BJ (cell line): ENCODE measurements at regions of chr12 and their contacts with region 1.

Region 1: DNA sequence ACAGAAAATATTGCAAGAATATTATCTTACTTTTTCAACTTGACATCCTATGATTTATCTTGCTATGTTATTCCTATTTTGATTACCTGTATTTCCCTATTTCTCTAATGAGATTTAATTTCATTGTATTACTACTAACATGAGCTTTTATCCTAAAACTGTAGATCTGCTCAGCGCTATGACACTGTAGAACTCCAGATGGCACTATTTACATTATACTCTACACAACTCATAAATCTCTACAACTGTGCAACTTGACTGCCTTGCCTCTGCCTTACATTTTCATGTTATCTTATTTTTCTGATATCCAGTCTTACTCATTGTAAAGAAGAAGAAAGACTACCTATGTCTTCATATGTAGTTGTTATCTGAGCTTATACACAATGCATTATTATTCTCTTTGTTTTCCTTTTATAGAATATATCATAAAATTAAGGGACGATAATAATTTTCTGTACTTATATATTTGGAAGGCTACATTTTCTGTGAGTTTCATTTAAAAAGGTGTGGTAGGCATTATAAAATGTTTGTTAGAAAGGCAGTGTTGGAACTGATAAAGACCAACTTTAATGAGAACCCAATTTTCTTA is 24.1 kb downstream of the NUP37 start:
- DNase-seq: no peak
- H3K4me3 ChIP-seq: no peak overlapping the region
- H3K27me3 ChIP-seq: no peaks in the 10 kb centered on the region
- CTCF ChIP-seq: peak; percentile 46

Region 2: DNA sequence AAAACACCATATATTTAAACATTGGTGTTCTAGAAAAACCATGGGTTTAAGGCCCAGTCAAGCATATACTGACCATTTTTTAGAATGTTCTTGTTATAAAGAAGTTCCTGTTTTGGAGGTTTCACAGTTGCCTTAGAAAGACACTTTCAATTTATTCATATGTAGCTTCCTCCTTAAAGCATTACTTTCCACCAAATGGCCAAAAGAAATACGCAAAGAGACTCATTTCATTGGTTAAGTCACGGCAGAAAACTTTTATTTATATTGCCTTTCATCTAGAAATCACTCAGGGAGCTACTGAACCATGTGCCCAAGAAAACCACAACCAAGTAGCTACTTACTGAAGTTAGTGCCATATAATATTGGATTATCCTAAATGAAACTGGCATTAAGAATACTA is 461.0 kb before region 1 on chr12:
- CTCF ChIA-PET with region 1: no interaction called
- POLR2A ChIA-PET with region 1: no interaction called
- DNase-seq: no peak
- H3K4me3 ChIP-seq: no peak overlapping the region
- H3K27me3 ChIP-seq: no peaks in the 10 kb centered on the region
- CTCF ChIP-seq: no peak

Region 3: GRCh38 chr12:102080842-102081241 is 14.9 kb before region 1 on chr12:
- CTCF ChIA-PET with region 1: no interaction called
- POLR2A ChIA-PET with region 1: no interaction called
- DNase-seq: no peak
- H3K4me3 ChIP-seq: no peak overlapping the region
- H3K27me3 ChIP-seq: no peaks in the 10 kb centered on the region
- CTCF ChIP-seq: no peak

Region 4: GRCh38 chr12:102484428-102484958 is 388.7 kb after region 1 on chr12:
- CTCF ChIA-PET with region 1: interaction called, 15 read pairs
- POLR2A ChIA-PET with region 1: no interaction called
- DNase-seq: no peak
- H3K4me3 ChIP-seq: no peak overlapping the region
- H3K27me3 ChIP-seq: no peaks in the 10 kb centered on the region
- CTCF ChIP-seq: peak; percentile 84